PC-9 (cell line): ENCODE measurements at regions of chr14 and their contacts with region 1.

Region 1: GRCh38 chr14:58663494-58664415 is 26.0 kb downstream of the DACT1 start:
- DNase-seq: no peak
- H3K4me3 ChIP-seq: no peak overlapping the region
- H3K27ac ChIP-seq: no peak overlapping the region
- H3K4me1 ChIP-seq: no peaks in the 10 kb centered on the region
- H3K27me3 ChIP-seq: peaks cover 12% of the 10 kb centered on the region
- CTCF ChIP-seq: no peak

Region 2: GRCh38 chr14:58607946-58608306 is 55.8 kb before region 1 on chr14:
- CTCF ChIA-PET with region 1: no interaction called
- POLR2A ChIA-PET with region 1: no interaction called
- intact Hi-C with region 1: loop called (anchors 10 kb)
- DNase-seq: peak in 1 of 2 experiments; percentile 54
- H3K4me3 ChIP-seq: no peak overlapping the region
- H3K27ac ChIP-seq: no peak overlapping the region
- H3K4me1 ChIP-seq: no peaks in the 10 kb centered on the region
- H3K27me3 ChIP-seq: peaks cover 19% of the 10 kb centered on the region
- CTCF ChIP-seq: no peak